Sigmoid colon (tissue), 7 donors: ENCODE measurements at regions of chr6 and their contacts with region 1.

Region 1: DNA sequence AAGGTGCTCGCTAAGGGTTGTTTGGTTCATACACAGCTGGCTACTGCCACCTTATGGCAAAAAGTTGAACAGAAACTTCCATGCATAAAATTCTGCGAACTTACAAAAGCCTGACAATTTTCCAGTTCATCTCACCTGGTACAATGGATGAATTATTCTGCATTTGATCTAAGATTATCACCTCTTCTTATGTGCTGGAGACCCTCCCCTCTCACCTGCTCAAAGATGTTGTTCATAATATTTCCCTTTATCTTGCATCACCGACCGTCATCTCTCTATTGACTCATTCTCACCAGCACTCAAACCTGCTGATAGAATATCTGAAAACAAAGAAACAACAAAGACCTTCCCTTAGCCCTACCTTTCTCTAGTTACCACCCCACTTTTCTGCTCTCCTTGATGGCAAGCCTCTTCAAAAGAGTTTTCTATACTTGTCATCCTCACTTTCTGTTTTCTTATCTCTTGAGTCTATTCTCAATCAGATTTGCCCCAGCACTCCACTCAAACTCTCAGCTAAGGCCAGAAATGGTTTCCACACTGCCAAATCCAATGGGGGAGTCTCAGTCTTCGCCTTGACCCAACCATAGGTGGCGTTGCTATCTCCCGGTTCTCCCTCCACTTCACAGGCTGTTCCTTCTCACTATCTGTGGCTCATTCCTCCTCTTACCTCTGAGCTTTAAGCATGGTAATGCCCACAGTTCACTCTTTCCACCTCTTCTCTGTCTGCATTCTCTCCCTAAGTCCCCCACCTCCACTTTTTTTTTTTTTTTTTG is 25.8 kb downstream of the SNRNP48 start:
- DNase-seq: no peak
- H3K4me3 ChIP-seq: no peak overlapping the region
- H3K27ac ChIP-seq: no peak overlapping the region
- H3K4me1 ChIP-seq: peaks cover 0 to 10% (median 6%) of the 10 kb centered on the region in 4 donors
- H3K27me3 ChIP-seq: no peaks in the 10 kb centered on the region
- CTCF ChIP-seq: peak; percentile 24 to 66 (median 56)
- EP300 ChIP-seq: no peak
- POLR2A ChIP-seq: no peak

Region 2: DNA sequence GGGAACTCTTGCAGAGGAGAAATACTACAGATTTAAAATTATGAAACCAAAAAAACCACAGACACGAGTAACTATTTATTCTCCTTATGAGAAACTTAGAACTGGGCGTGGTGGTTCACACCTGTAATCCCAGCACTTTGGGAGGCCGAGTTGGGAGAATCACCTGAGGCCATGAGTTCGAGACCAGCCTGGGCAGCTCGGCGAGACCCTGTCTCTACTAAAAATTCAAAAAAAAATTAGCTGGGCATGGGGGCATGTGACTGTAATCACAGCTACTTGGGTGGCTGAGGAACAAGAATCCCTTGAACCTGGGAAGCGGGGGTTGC is 339.6 kb before region 1 on chr6:
- intact Hi-C with region 1: loop called (anchors 1 kb)
- DNase-seq: no peak
- H3K4me3 ChIP-seq: no peak overlapping the region
- H3K27ac ChIP-seq: no peak overlapping the region
- H3K4me1 ChIP-seq: peaks cover 0 to 4% (median 0%) of the 10 kb centered on the region in 4 donors
- H3K27me3 ChIP-seq: no peaks in the 10 kb centered on the region
- CTCF ChIP-seq: no peak
- EP300 ChIP-seq: no peak
- POLR2A ChIP-seq: no peak